PC-3 (cell line): ENCODE measurements at regions of chr4 and their contacts with region 1.

Region 1: GRCh38 chr4:132227151-132227856 is 921.8 kb upstream of the PCDH10 start:
- DNase-seq: peak; percentile 37
- ATAC-seq: peak; percentile 77
- H3K4me3 ChIP-seq: peak overlapping the region; percentile 62
- H3K27ac ChIP-seq: no peak overlapping the region
- H3K4me1 ChIP-seq: no peaks in the 10 kb centered on the region
- H3K27me3 ChIP-seq: no peaks in the 10 kb centered on the region
- CTCF ChIP-seq: no peak

Region 2: DNA sequence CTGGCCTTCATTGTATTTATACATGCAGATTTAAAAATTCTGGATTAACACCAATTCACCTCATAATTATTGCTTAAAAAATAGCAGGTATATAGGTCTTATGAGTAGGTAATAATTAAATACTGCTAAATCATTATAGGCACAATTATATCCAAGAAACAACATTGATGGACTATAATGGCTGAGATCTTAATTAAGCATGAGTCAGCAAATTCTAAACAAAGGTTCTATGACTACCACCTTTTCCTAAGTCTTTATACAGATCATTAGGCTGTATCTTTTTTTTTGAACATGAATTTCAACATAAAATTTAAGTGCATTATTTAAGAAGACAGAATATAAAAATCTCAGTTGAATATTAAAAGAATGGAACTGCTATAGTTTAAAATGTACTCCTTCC is 756.9 kb before region 1 on chr4:
- CTCF ChIA-PET with region 1: no interaction called
- POLR2A ChIA-PET with region 1: no interaction called
- intact Hi-C with region 1: loop called (anchors 2 kb)
- DNase-seq: no peak
- ATAC-seq: no peak
- H3K4me3 ChIP-seq: no peak overlapping the region
- H3K27ac ChIP-seq: no peak overlapping the region
- H3K4me1 ChIP-seq: no peaks in the 10 kb centered on the region
- H3K27me3 ChIP-seq: no peaks in the 10 kb centered on the region
- CTCF ChIP-seq: no peak

Region 3: GRCh38 chr4:131644619-131645018 is 582.7 kb before region 1 on chr4:
- CTCF ChIA-PET with region 1: no interaction called
- POLR2A ChIA-PET with region 1: interaction called, 3 read pairs
- intact Hi-C with region 1: loop called (anchors 10 kb)
- DNase-seq: peak; percentile 38
- ATAC-seq: peak; percentile 79
- H3K4me3 ChIP-seq: no peak overlapping the region
- H3K27ac ChIP-seq: no peak overlapping the region
- H3K4me1 ChIP-seq: no peaks in the 10 kb centered on the region
- H3K27me3 ChIP-seq: no peaks in the 10 kb centered on the region
- CTCF ChIP-seq: peak; percentile 58

Region 4: DNA sequence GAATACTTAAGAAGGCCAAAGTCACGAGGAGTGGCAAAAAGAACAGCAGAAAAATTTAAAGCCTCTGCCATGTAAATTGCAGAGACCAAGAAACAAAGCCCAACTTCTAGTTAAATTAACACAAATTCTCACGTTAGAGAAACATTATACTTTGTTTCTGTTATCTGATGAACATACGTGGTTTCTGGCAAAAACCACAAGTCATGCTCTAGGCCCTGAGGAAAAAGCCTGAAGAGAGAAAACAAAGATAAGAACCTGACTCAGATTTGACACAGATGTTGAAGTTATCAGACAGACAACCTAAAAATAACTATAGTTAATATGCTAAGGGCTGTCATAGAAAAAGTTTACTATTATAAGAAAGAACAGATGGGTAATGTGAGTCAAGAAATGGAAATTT is 772.7 kb after region 1 on chr4:
- CTCF ChIA-PET with region 1: no interaction called
- POLR2A ChIA-PET with region 1: no interaction called
- intact Hi-C with region 1: no loop called
- DNase-seq: no peak
- ATAC-seq: no peak
- H3K4me3 ChIP-seq: no peak overlapping the region
- H3K27ac ChIP-seq: no peak overlapping the region
- H3K4me1 ChIP-seq: no peaks in the 10 kb centered on the region
- H3K27me3 ChIP-seq: no peaks in the 10 kb centered on the region
- CTCF ChIP-seq: no peak